ENCODE measurements at regions of chr6 and their contacts with region 1.

Region 1: GRCh38 chr6:87407901-87408720 is at the start of gene CFAP206:
- DNase-seq: peak; percentile 90 to 93 (median 91)
- ATAC-seq: peak; percentile 96
- H3K4me3 ChIP-seq: peak within 1 kb of the TSS; percentile 89
- H3K27ac ChIP-seq: peak within 1 kb of the TSS; percentile 74
- H3K4me1 ChIP-seq: peaks cover 0 to 4% of the 10 kb centered on the region in 2 experiments; a peak in 1 of 5 replicates
- H3K27me3 ChIP-seq: no peaks in the 10 kb centered on the region; a peak in 1 of 5 replicates
- CTCF ChIP-seq: peak in 2 of 3 experiments; percentile 13; a peak in 2 of 6 replicates
- EP300 ChIP-seq: no peak
- POLR2A ChIP-seq: no peak
- RAD21 ChIP-seq: peak; percentile 18 to 41; a peak in 3 of 4 replicates
- polyA plus RNA-seq, gene CFAP206: 0.13 to 0.18 TPM

Region 2: GRCh38 chr6:87251225-87251624 is 156.9 kb before region 1 on chr6:
- CTCF ChIA-PET with region 1: no interaction called
- POLR2A ChIA-PET with region 1: no interaction called
- in situ Hi-C with region 1: no loop called
- intact Hi-C with region 1: no loop called
- DNase-seq: no peak
- ATAC-seq: no peak
- H3K4me3 ChIP-seq: no peak overlapping the region
- H3K27ac ChIP-seq: no peak overlapping the region
- H3K4me1 ChIP-seq: no peaks in the 10 kb centered on the region
- H3K27me3 ChIP-seq: no peaks in the 10 kb centered on the region
- CTCF ChIP-seq: no peak
- EP300 ChIP-seq: no peak
- POLR2A ChIP-seq: no peak
- RAD21 ChIP-seq: no peak

Region 3: GRCh38 chr6:87472525-87473418 is 64.7 kb after region 1 on chr6 and contains the start of gene SLC35A1:
- CTCF ChIA-PET with region 1: interaction called, 3 read pairs
- POLR2A ChIA-PET with region 1: interaction called, 3 read pairs
- in situ Hi-C with region 1: no loop called
- intact Hi-C with region 1: loop called (anchors 5 kb)
- DNase-seq: peak; percentile 89 to 92 (median 90)
- ATAC-seq: peak; percentile 94
- H3K4me3 ChIP-seq: peak within 1 kb of the TSS; percentile 98
- H3K27ac ChIP-seq: peak within 1 kb of the TSS; percentile 100
- H3K4me1 ChIP-seq: peaks cover 5 to 9% of the 10 kb centered on the region in 2 experiments; a peak in 4 of 5 replicates
- H3K27me3 ChIP-seq: no peaks in the 10 kb centered on the region
- CTCF ChIP-seq: no peak
- EP300 ChIP-seq: no peak
- POLR2A ChIP-seq: peak; percentile 86
- RAD21 ChIP-seq: no peak
- polyA plus RNA-seq, gene SLC35A1: 36.1 to 37.1 TPM

Region 4: DNA sequence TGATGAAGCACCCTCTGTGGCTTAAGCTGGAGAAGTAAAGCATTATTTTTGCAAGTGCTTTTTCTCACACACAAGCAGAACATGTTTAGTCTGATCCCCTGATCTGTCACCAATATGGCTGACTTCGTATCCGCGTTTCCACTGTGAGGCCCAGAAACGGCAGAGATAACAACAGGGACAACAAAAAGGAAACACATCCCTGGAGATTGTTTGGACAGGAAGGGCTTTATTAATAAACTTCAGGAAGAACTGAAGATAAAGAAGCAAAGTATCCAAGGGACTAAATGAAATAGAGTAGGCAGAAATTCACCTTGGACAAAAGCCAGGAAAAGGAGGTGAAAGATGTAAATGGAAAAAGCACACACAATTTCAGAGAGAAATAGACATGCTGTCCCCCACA is 132.4 kb after region 1 on chr6:
- CTCF ChIA-PET with region 1: no interaction called
- POLR2A ChIA-PET with region 1: no interaction called
- in situ Hi-C with region 1: no loop called
- intact Hi-C with region 1: no loop called
- DNase-seq: no peak
- ATAC-seq: no peak
- H3K4me3 ChIP-seq: no peak overlapping the region
- H3K27ac ChIP-seq: no peak overlapping the region
- H3K4me1 ChIP-seq: no peaks in the 10 kb centered on the region
- H3K27me3 ChIP-seq: no peaks in the 10 kb centered on the region
- CTCF ChIP-seq: no peak
- EP300 ChIP-seq: no peak
- POLR2A ChIP-seq: no peak
- RAD21 ChIP-seq: no peak